ENCODE measurements at regions of chr5 and their contacts with region 1.

Region 1: GRCh38 chr5:5421961-5422818 is at the start of gene ICE1:
- DNase-seq: peak; percentile 97 to 100
- H3K4me3 ChIP-seq: peak within 1 kb of the TSS; percentile 86
- H3K27ac ChIP-seq: peak within 1 kb of the TSS; percentile 89
- H3K4me1 ChIP-seq: peaks cover 32% of the 10 kb centered on the region
- H3K27me3 ChIP-seq: no peaks in the 10 kb centered on the region
- CTCF ChIP-seq: 0 out of 2 replicates have a peak, but pooled peaks have one; percentile 22
- total RNA-seq, gene ICE1: 59.1 and 68.4 TPM in 2 replicates

Region 2: DNA sequence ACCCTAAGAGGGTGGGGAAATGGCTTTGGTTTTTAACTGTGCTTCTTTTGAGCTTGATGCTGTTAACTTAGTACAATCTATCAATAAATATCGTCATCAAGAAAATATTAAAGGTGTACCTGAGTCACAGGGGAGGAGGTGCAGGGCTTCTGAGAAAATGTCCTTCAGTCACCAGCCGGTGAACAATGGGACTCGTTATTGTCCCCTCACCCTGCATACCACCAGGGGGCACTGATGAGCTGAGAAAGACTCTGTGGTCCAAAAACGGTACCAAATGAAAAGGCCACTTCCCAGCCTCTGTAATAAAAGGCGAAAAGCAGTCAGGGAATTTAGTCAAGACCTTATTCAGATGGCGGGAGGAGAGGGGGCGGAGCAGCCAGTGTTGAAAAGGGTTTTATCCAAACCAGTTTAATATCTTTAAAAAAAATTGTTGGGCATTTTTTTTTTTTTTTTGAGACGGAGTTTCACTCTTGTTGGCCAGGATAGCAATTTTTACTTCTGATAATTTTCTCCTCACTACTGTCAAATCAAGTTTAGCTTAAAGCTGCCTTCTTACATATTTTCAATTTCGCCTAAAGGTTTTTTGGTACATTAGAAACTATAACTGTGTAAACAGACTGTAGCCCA is 554.0 kb before region 1 on chr5:
- CTCF ChIA-PET with region 1: interaction called, 4 read pairs
- POLR2A ChIA-PET with region 1: no interaction called
- intact Hi-C with region 1: loop called (anchors 1 kb)
- DNase-seq: peak; percentile 42 to 75
- H3K4me3 ChIP-seq: no peak overlapping the region
- H3K27ac ChIP-seq: no peak overlapping the region
- H3K4me1 ChIP-seq: no peaks in the 10 kb centered on the region
- H3K27me3 ChIP-seq: peaks cover 47% of the 10 kb centered on the region
- CTCF ChIP-seq: peak; percentile 98

Region 3: GRCh38 chr5:4976902-4977301 is 445.3 kb before region 1 on chr5:
- CTCF ChIA-PET with region 1: no interaction called
- POLR2A ChIA-PET with region 1: interaction called, 3 read pairs
- intact Hi-C with region 1: loop called (anchors 1 kb)
- DNase-seq: no peak
- H3K4me3 ChIP-seq: no peak overlapping the region
- H3K27ac ChIP-seq: no peak overlapping the region
- H3K4me1 ChIP-seq: no peaks in the 10 kb centered on the region
- H3K27me3 ChIP-seq: peaks cover 62% of the 10 kb centered on the region
- CTCF ChIP-seq: no peak

Region 4: DNA sequence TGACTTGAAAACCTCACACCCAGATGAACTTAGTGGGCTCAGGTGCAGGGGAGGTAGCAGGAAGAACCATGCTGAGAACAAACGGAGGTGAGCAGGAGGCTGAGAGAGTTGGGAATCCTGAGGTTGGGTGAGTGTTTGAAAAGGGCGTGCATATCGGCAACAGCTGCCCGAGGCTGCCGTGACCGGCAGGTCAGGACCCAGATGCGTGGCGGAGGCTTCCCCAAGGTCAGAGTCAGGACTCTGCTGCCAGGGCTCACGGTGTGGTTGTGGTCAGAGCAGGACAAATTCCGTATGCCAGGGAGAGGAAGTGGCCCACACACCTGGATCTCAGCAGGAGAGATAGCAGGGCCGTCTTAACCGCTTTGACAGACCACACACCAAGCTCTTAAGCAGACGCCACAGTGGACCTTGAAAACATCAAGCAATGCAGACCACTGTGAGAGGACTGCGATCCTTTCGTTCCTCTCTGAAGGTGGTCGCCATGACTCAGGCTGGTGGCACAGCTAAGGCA is 238.9 kb before region 1 on chr5:
- CTCF ChIA-PET with region 1: no interaction called
- POLR2A ChIA-PET with region 1: no interaction called
- intact Hi-C with region 1: no loop called
- DNase-seq: no peak
- H3K4me3 ChIP-seq: no peak overlapping the region
- H3K27ac ChIP-seq: no peak overlapping the region
- H3K4me1 ChIP-seq: no peaks in the 10 kb centered on the region
- H3K27me3 ChIP-seq: no peaks in the 10 kb centered on the region
- CTCF ChIP-seq: no peak

Region 5: DNA sequence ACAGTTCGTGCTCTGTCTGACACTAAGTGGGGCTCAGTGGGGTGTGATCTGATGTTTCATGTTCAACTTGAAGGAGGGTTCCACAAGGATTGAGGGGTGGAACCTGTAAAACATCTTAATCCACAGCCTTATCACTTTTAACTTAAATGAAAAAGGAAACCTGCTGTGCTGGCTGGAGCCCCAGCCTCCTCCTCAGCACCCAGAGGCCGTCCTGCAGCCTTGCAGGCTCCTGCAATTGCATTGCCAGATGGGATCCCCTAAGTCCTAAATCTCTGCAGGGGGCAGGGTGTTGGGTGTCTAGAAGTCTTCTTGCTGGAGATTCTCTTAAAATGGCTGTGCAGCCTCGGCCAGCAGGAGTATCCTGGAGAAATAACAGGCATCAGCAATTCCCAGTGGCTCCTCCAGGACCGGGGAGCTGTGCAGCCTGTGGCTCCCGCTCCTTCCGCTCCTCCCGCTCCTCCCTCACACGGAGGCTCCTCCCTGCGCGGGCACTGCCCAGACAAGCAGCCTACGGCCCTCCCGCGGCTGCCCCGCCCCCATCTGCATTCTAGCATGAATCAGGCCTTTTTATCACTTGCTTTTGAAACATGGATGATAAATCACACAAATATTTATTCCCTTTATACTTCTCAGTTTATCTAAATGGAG is 151.1 kb before region 1 on chr5:
- CTCF ChIA-PET with region 1: no interaction called
- POLR2A ChIA-PET with region 1: interaction called, 4 read pairs
- intact Hi-C with region 1: loop called (anchors 2 kb)
- DNase-seq: peak; percentile 97 to 100
- H3K4me3 ChIP-seq: peak overlapping the region; percentile 52
- H3K27ac ChIP-seq: peak overlapping the region; percentile 90
- H3K4me1 ChIP-seq: peaks cover 33% of the 10 kb centered on the region
- H3K27me3 ChIP-seq: no peaks in the 10 kb centered on the region
- CTCF ChIP-seq: no peak

Region 6: DNA sequence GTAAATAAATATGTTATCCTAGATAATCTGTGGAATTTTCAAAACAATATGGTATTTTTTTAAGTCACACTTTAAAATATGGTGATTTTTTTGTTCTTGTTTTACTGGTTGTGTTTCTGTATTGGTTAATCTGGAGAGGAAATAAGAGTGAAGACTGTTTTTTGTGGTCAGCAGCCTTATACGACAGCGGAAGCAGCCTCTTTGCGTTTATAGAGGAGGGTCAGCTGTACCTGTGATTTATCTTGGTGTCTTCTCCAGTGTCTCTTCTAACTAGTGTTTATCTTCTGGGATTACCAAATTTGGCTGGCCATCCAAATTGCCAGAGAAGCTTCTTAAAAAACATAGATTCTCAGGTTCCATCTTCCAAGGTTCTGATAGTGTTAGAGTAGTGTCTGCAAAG is 59.0 kb after region 1 on chr5:
- CTCF ChIA-PET with region 1: no interaction called
- POLR2A ChIA-PET with region 1: interaction called, 19 read pairs
- intact Hi-C with region 1: no loop called
- DNase-seq: no peak
- H3K4me3 ChIP-seq: no peak overlapping the region
- H3K27ac ChIP-seq: no peak overlapping the region
- H3K4me1 ChIP-seq: no peaks in the 10 kb centered on the region
- H3K27me3 ChIP-seq: no peaks in the 10 kb centered on the region
- CTCF ChIP-seq: no peak

Region 7: DNA sequence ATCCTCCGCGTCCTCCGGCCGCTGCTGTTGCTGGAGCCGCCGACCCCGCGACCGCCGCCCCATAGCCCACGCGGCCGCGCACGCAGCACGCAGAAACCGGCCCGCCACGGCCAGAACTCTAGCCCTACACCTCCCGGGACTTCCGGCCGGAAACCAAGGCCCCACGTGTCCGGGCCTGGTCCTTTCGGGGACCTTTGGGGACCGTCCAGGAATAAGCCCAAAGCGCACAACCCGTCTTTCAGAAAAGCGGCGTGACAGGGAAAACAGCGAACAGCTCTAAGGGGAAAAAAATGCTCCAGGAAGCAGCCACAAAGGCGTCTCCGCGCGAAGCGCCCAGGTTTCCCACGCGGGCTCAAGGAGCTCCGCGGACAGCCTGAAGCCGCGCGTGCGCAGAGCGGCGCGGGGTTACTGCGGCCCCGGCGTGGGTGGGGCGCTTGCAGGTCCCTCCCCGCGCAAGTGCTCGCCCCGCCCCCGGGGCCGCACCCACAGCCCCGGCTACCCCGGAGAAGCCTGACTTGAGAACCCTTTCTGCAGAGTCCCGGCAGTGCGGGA is 1210.8 kb after region 1 on chr5 and contains the starts of genes NSUN2 and SRD5A1:
- CTCF ChIA-PET with region 1: no interaction called
- POLR2A ChIA-PET with region 1: no interaction called
- intact Hi-C with region 1: loop called (anchors 1 kb)
- DNase-seq: peak; percentile 79 to 99
- H3K4me3 ChIP-seq: peak within 1 kb of the TSS; percentile 72
- H3K27ac ChIP-seq: peak within 1 kb of the TSS; percentile 83
- H3K4me1 ChIP-seq: peaks cover 22% of the 10 kb centered on the region
- H3K27me3 ChIP-seq: no peaks in the 10 kb centered on the region
- CTCF ChIP-seq: no peak
- total RNA-seq, gene NSUN2: 148 and 155 TPM in 2 replicates
- total RNA-seq, gene SRD5A1: 52.3 and 56.7 TPM in 2 replicates

Measured in PC-9 (cell line).